ENCODE measurements at regions of chr1 and their contacts with region 1.

Region 1: DNA sequence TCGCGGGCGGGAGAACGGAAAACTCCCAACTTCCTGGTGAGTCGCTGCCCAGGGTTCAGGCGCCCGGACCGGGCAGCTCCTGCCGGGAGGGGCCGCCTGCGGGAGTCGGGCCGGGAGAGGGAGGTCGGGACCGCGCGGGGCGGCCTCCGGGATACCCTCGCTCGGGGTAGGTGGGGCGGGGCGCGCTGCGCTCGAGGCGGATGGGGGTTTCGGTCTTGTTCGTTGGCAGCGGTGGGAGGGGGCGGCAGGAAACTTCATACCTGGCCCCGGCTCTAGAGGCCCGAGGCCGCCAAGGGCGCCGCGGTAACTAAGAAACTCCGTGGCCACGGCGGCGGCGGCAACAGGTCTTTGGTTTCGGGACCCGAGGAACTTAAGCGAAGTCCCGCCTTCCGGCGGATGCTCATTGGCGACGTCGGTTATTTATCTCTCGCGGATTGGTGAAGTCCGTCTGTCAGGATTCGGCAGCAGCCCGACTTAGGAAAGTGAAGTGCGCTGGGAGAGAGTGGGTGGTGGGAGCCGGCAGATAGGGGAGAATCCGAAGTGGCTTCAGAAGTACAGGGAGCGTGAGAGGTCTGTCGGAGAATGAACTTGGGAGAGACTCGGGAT is 546 bp downstream of the NEK7 start:
- DNase-seq: peak; percentile 84
- H3K4me3 Mint-ChIP-seq: peak overlapping the region; percentile 100
- H3K27ac Mint-ChIP-seq: peak overlapping the region; percentile 98
- H3K4me1 Mint-ChIP-seq: peaks cover 30% of the 10 kb centered on the region
- H3K27me3 Mint-ChIP-seq: no peaks in the 10 kb centered on the region

Region 2: GRCh38 chr1:197521118-197521739 is 636.1 kb before region 1 on chr1:
- CTCF ChIA-PET with region 1: no interaction called
- intact Hi-C with region 1: loop called (anchors 2 kb)
- DNase-seq: peak; percentile 37
- H3K4me3 Mint-ChIP-seq: no peak overlapping the region
- H3K27ac Mint-ChIP-seq: no peak overlapping the region
- H3K4me1 Mint-ChIP-seq: no peaks in the 10 kb centered on the region
- H3K27me3 Mint-ChIP-seq: no peaks in the 10 kb centered on the region

Region 3: GRCh38 chr1:197948926-197949899 is 208.1 kb before region 1 on chr1:
- CTCF ChIA-PET with region 1: no interaction called
- intact Hi-C with region 1: loop called (anchors 5 kb)
- DNase-seq: peak; percentile 45
- H3K4me3 Mint-ChIP-seq: peak overlapping the region; percentile 10
- H3K27ac Mint-ChIP-seq: peak overlapping the region; percentile 69
- H3K4me1 Mint-ChIP-seq: peaks cover 21% of the 10 kb centered on the region
- H3K27me3 Mint-ChIP-seq: no peaks in the 10 kb centered on the region

Region 4: DNA sequence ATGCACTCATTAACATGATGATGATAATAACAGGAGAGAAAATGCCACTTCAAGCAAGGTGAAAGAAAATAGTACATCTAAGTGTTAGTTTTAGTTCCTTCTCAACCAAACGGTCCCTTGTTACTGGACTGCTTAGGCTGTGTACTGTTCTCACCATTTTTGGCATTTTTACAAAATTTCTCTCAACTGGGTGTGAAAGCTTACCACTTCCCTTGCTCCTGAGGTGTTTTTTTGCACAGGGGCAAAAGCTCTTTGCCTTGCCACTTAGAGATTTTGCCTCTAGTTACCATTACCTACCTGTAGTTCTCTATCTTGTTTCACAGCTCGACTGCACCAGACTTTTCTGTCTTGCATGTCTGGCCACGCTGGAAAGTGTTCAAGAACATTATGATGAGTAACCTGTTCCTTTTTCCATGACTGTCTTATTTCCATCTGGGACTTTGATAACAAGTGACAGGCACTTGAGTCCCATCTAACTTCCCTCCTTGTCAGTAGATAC is 10.1 kb after region 1 on chr1:
- CTCF ChIA-PET with region 1: interaction called, 9 read pairs
- intact Hi-C with region 1: loop called (anchors 1 kb)
- DNase-seq: peak; percentile 44
- H3K4me3 Mint-ChIP-seq: peak overlapping the region; percentile 55
- H3K27ac Mint-ChIP-seq: peak overlapping the region; percentile 93
- H3K4me1 Mint-ChIP-seq: peaks cover 90% of the 10 kb centered on the region
- H3K27me3 Mint-ChIP-seq: no peaks in the 10 kb centered on the region

Region 5: GRCh38 chr1:198253668-198254067 is 96.3 kb after region 1 on chr1:
- CTCF ChIA-PET with region 1: interaction called, 3 read pairs
- intact Hi-C with region 1: loop called (anchors 1 kb)
- DNase-seq: no peak
- H3K4me3 Mint-ChIP-seq: no peak overlapping the region
- H3K27ac Mint-ChIP-seq: no peak overlapping the region
- H3K4me1 Mint-ChIP-seq: peaks cover 46% of the 10 kb centered on the region
- H3K27me3 Mint-ChIP-seq: no peaks in the 10 kb centered on the region

Region 6: DNA sequence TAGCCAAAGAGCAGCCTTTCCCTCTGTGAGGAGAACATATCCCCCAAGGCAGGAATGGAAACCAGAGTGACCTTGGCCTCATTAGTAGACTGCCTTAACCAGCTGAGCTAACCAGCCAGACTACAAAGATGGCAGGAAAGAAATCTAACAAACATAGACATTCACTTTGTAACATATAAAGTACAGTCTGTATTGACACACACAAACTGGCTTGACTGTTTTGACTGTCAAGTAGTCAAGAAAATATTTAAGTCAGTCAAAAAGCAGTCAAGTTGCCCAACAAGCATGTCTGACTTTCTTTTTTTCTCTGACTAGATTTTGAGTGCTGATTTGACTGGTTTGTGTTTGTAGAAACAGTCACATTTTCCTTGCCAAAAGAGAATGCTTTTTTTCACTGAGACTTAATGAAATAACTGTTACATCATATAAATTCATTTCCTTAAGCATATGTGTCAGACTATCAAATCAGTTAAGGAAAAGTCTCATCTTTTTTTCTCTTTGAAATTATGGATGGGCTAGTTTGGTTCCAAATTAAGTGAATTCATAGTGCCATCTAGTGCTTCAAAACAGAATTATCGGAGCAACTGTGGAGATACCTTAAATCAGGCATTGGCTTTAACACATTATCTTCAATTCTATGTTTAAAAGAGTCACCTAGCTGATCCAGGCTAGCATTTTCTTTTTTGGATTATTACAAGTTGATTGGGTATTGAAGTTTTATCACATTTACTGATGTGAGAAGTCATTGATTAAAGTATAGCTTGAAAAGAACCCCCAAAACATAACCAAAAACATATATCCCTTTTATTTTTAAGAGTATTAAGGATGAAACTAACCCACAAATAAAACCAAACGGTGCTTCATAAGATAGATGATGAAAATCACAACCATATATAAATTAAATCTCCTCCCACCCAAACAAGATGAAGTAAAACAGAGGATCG is 308.1 kb after region 1 on chr1:
- CTCF ChIA-PET with region 1: interaction called, 6 read pairs
- intact Hi-C with region 1: loop called (anchors 1 kb)
- DNase-seq: no peak
- H3K4me3 Mint-ChIP-seq: no peak overlapping the region
- H3K27ac Mint-ChIP-seq: no peak overlapping the region
- H3K4me1 Mint-ChIP-seq: peaks cover 13% of the 10 kb centered on the region
- H3K27me3 Mint-ChIP-seq: no peaks in the 10 kb centered on the region

Region 7: DNA sequence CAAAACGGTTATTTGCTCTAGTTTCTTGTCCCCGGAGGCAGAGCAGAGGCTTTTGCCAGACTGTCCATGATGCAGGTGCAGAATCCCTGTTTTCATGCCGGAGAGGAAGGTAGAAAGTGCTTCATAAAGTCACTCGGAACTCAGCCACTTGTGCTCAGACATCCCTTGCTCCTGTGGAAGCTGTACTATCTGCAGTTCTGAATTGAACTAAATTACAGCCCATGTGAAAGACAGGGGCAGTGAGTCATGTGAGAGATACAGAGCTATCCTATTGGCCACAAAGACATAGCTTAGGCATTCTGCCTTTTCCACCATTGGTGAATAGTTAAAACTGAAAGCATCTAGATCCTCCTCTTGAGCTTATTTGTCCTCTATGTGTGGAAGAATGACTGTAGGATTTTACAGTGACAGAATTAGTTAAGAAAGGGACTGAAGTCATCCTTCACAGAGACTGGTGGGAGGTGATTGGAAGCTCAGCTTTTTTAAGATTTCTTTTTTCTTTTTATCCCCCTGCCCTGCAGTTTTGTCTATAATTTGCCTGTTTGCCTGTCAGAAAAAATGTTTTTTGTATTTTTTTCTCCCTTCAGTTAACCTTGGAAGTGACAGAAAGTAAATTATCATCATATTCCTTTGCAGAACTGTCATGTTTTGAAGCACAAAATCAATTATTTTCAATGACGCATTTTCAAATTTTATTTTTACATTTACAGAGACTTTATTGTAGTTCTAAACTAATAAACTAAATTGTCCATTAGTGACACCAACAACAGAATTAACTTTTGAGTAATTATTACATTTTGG is 780.1 kb after region 1 on chr1:
- CTCF ChIA-PET with region 1: no interaction called
- intact Hi-C with region 1: loop called (anchors 5 kb)
- DNase-seq: peak; percentile 72
- H3K4me3 Mint-ChIP-seq: peak overlapping the region; percentile 89
- H3K27ac Mint-ChIP-seq: peak overlapping the region; percentile 84
- H3K4me1 Mint-ChIP-seq: peaks cover 21% of the 10 kb centered on the region
- H3K27me3 Mint-ChIP-seq: no peaks in the 10 kb centered on the region